ENCODE measurements at regions of chr1 and their contacts with region 1.

Region 1: GRCh38 chr1:197224160-197224559 is 43.9 kb upstream of the CRB1 start:
- DNase-seq: peak; percentile 37
- H3K4me3 ChIP-seq: no peak overlapping the region
- H3K27ac ChIP-seq: no peak overlapping the region
- H3K4me1 ChIP-seq: no peaks in the 10 kb centered on the region
- H3K27me3 ChIP-seq: no peaks in the 10 kb centered on the region
- CTCF ChIP-seq: peak; percentile 44; the same call in 1 of the 2 replicates

Region 2: DNA sequence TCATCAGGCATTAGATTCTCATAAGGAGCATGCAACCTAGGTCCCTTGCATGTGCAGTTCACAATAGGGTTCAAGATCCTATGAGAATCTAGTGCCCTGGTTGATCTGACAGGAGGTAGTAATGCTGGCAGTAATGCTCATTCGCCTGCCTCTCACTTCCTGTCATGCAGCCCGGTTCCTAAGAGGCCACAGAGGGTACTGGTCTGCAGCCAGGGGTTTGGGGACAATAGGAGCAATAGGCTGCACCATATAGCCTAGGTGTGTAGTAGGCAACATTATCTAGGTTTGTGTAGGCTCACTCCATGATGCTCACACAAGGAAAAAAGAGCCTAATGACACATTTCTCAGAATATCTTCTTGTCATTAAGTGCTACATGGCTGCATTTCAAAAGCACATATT is 221.0 kb before region 1 on chr1:
- CTCF ChIA-PET with region 1: no interaction called
- POLR2A ChIA-PET with region 1: no interaction called
- intact Hi-C with region 1: no loop called
- DNase-seq: no peak
- H3K4me3 ChIP-seq: no peak overlapping the region
- H3K27ac ChIP-seq: no peak overlapping the region
- H3K4me1 ChIP-seq: no peaks in the 10 kb centered on the region
- H3K27me3 ChIP-seq: no peaks in the 10 kb centered on the region
- CTCF ChIP-seq: no peak

Region 3: GRCh38 chr1:197327776-197328364 is 103.7 kb after region 1 on chr1:
- CTCF ChIA-PET with region 1: no interaction called
- POLR2A ChIA-PET with region 1: no interaction called
- intact Hi-C with region 1: loop called (anchors 5 kb)
- DNase-seq: peak; percentile 12
- H3K4me3 ChIP-seq: no peak overlapping the region
- H3K27ac ChIP-seq: no peak overlapping the region
- H3K4me1 ChIP-seq: no peaks in the 10 kb centered on the region
- H3K27me3 ChIP-seq: no peaks in the 10 kb centered on the region
- CTCF ChIP-seq: peak; percentile 70

Region 4: DNA sequence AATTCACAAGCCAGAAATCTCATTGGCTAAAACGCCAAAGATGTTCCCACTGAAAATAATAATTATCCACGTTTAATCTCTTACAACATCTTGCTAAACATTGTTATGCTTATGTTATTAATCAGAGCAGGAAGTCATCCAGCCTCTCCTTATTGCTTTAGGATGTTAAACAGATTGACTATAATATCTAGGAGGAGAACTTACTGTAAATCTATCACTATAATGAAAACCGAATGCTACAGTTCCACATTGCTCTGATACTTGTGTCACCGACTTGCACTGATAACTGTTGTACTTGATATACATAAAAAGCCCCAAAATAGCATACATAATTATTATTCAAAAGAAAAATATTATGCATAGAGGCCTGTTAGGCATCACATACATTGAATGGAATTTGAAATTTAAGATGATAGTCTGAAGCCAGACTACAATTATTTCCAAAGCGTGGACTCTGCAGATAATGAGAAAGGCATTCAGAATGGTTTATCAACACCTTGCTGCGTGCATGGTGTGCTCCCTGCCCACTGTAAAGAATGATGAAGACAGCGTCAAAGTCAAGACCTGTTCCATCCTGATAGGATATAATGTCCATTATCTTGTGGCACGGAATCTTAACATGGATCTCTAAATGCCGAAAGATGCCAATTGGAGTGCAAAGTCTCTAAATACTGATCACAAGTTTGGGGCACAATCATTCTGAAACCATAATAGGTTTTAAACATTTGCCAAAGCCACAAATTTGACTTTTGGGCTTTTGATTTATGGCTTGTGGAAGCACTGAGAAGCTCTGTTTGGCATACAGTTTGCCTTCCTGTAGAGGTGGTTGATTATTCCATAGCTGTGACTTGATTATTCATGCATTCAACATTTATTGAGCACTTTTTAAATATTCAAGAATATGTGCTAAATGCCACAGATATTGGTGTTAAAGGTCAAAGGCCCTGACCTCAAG is 115.2 kb after region 1 on chr1:
- CTCF ChIA-PET with region 1: interaction called, 6 read pairs
- POLR2A ChIA-PET with region 1: no interaction called
- intact Hi-C with region 1: loop called (anchors 5 kb)
- DNase-seq: no peak
- H3K4me3 ChIP-seq: no peak overlapping the region
- H3K27ac ChIP-seq: no peak overlapping the region
- H3K4me1 ChIP-seq: no peaks in the 10 kb centered on the region
- H3K27me3 ChIP-seq: no peaks in the 10 kb centered on the region
- CTCF ChIP-seq: no peak

Region 5: GRCh38 chr1:197374428-197374827 is 150.3 kb after region 1 on chr1:
- CTCF ChIA-PET with region 1: no interaction called
- POLR2A ChIA-PET with region 1: no interaction called
- intact Hi-C with region 1: no loop called
- DNase-seq: no peak
- H3K4me3 ChIP-seq: no peak overlapping the region
- H3K27ac ChIP-seq: no peak overlapping the region
- H3K4me1 ChIP-seq: no peaks in the 10 kb centered on the region
- H3K27me3 ChIP-seq: no peaks in the 10 kb centered on the region
- CTCF ChIP-seq: no peak

Region 6: GRCh38 chr1:197481101-197481500 is 256.9 kb after region 1 on chr1:
- CTCF ChIA-PET with region 1: no interaction called
- POLR2A ChIA-PET with region 1: no interaction called
- intact Hi-C with region 1: no loop called
- DNase-seq: peak; percentile 35
- H3K4me3 ChIP-seq: no peak overlapping the region
- H3K27ac ChIP-seq: no peak overlapping the region
- H3K4me1 ChIP-seq: no peaks in the 10 kb centered on the region
- H3K27me3 ChIP-seq: no peaks in the 10 kb centered on the region
- CTCF ChIP-seq: no peak

Measured in A673 (cell line).